PC-3 (cell line): ENCODE measurements at regions of chr1 and their contacts with region 1.

Region 1: GRCh38 chr1:227604446-227604845 is 41.1 kb downstream of the ZNF678 start:
- DNase-seq: no peak
- ATAC-seq: no peak
- H3K4me3 ChIP-seq: no peak overlapping the region
- H3K27ac ChIP-seq: no peak overlapping the region
- H3K4me1 ChIP-seq: no peaks in the 10 kb centered on the region
- H3K27me3 ChIP-seq: no peaks in the 10 kb centered on the region
- CTCF ChIP-seq: no peak

Region 2: DNA sequence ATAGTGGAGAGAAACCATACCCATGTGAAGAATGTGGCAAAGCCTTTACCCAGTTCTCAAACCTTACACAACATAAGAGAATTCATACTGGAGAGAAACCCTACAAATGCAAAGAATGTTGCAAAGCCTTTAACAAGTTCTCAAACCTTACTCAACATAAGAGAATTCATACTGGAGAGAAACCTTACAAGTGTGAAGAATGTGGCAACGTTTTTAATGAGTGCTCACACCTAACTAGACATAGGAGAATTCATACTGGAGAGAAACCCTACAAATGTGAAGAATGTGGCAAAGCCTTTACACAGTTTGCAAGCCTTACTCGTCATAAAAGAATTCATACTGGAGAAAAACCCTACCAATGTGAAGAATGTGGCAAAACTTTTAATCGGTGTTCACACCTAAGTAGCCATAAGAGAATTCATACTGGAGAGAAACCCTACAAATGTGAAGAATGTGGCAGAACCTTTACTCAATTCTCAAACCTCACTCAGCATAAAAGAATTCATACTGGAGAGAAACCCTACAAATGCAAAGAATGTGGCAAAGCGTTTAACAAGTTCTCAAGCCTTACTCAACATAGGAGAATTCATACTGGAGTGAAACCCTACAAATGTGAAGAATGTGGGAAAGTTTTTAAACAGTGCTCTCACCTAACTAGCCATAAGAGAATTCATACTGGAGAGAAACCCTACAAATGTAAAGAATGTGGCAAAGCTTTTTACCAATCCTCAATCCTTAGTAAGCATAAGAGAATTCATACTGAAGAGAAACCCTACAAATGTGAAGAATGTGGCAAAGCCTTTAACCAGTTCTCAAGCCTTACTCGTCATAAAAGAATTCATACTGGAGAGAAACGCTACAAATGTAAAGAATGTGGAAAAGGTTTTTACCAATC is 50.7 kb after region 1 on chr1:
- CTCF ChIA-PET with region 1: no interaction called
- POLR2A ChIA-PET with region 1: no interaction called
- intact Hi-C with region 1: loop called (anchors 10 kb)
- DNase-seq: peak; percentile 9
- ATAC-seq: no peak
- H3K4me3 ChIP-seq: peak overlapping the region; percentile 5; the same call in 1 of the 2 replicates
- H3K27ac ChIP-seq: no peak overlapping the region
- H3K4me1 ChIP-seq: no peaks in the 10 kb centered on the region
- H3K27me3 ChIP-seq: no peaks in the 10 kb centered on the region
- CTCF ChIP-seq: no peak

Region 3: GRCh38 chr1:228004331-228004855 is 399.9 kb after region 1 on chr1:
- CTCF ChIA-PET with region 1: no interaction called
- POLR2A ChIA-PET with region 1: no interaction called
- intact Hi-C with region 1: no loop called
- DNase-seq: peak; percentile 71
- ATAC-seq: peak; percentile 65
- H3K4me3 ChIP-seq: no peak overlapping the region
- H3K27ac ChIP-seq: no peak overlapping the region
- H3K4me1 ChIP-seq: peaks cover 4% of the 10 kb centered on the region; the same call in 1 of the 2 replicates
- H3K27me3 ChIP-seq: peaks cover 33% of the 10 kb centered on the region
- CTCF ChIP-seq: peak; percentile 94